Activated CD4-positive, alpha-beta memory T cell treated with anti-CD3 and anti-CD28 coated beads for 36 hours (primary cell): ENCODE measurements at regions of chr7 and their contacts with region 1.

Region 1: GRCh38 chr7:50335795-50336754 is 31.6 kb downstream of the IKZF1 start:
- DNase-seq: peak; percentile 93
- H3K4me3 Mint-ChIP-seq: no peak overlapping the region
- H3K27ac Mint-ChIP-seq: no peak overlapping the region
- H3K4me1 Mint-ChIP-seq: peaks cover 2% of the 10 kb centered on the region
- H3K27me3 Mint-ChIP-seq: no peaks in the 10 kb centered on the region

Region 2: GRCh38 chr7:50166997-50167965 is 168.8 kb before region 1 on chr7:
- CTCF ChIA-PET with region 1: no interaction called
- POLR2A ChIA-PET with region 1: no interaction called
- intact Hi-C with region 1: no loop called
- DNase-seq: peak; percentile 30
- H3K4me3 Mint-ChIP-seq: no peak overlapping the region
- H3K27ac Mint-ChIP-seq: peak overlapping the region; percentile 59
- H3K4me1 Mint-ChIP-seq: peaks cover 54% of the 10 kb centered on the region
- H3K27me3 Mint-ChIP-seq: no peaks in the 10 kb centered on the region

Region 3: DNA sequence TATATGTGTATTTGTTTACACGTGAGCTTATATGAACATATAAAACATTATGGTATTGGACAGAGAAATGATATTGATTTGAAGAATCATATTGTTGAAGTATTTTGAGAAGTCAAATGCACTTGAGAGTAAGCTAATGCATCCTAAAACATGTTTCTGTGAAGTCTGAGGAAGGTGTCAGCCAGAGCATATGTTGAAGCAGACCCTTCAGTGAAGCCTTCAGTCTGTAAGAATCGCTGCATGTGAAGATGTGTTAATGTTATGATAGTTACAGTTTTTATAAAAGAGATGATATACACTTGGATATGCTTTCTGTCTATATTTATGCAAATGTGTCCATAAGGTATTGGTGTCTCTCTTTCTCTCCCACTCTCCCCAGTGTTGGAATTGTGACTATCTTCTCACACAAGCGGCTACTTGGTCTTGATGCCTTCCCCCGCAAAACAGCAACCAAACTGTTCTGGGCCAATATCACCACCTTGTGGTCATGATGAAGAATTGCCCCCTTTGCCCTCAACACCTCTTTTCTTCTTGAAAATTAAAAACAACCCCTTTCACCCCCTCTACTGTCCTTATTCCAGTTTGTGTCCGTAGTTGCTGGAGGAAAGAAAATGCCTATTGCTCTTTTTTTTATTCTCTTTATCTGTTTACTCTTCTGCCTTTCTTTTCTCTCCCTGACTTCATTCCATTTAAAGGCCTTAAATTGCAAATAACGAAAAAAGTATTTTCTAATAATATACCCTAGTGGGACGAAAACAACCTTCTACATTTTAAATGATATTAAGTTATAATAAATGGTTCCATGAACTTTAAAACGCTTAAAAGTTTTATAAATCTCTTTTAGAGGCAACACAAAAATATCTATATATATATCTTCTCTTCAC is 33.3 kb after region 1 on chr7:
- CTCF ChIA-PET with region 1: interaction called, 23 read pairs
- POLR2A ChIA-PET with region 1: interaction called, 487 read pairs
- intact Hi-C with region 1: loop called (anchors 5 kb)
- DNase-seq: peak; percentile 56
- H3K4me3 Mint-ChIP-seq: no peak overlapping the region
- H3K27ac Mint-ChIP-seq: peak overlapping the region; percentile 93
- H3K4me1 Mint-ChIP-seq: peaks cover 97% of the 10 kb centered on the region
- H3K27me3 Mint-ChIP-seq: no peaks in the 10 kb centered on the region